ENCODE measurements at regions of chr13 and their contacts with region 1.

Region 1: GRCh38 chr13:29140277-29140676 is 320.1 kb downstream of the MTUS2 start:
- DNase-seq: no peak
- ATAC-seq: no peak
- H3K4me3 ChIP-seq: no peak overlapping the region
- H3K4me3 Mint-ChIP-seq: no peak overlapping the region
- H3K27ac ChIP-seq: no peak overlapping the region
- H3K27ac Mint-ChIP-seq: no peak overlapping the region
- H3K4me1 ChIP-seq: no peaks in the 10 kb centered on the region
- H3K4me1 Mint-ChIP-seq: no peaks in the 10 kb centered on the region
- H3K27me3 ChIP-seq: no peaks in the 10 kb centered on the region
- H3K27me3 Mint-ChIP-seq: peaks cover 0 to 6% (median 0%) of the 10 kb centered on the region in 5 donors

Region 2: DNA sequence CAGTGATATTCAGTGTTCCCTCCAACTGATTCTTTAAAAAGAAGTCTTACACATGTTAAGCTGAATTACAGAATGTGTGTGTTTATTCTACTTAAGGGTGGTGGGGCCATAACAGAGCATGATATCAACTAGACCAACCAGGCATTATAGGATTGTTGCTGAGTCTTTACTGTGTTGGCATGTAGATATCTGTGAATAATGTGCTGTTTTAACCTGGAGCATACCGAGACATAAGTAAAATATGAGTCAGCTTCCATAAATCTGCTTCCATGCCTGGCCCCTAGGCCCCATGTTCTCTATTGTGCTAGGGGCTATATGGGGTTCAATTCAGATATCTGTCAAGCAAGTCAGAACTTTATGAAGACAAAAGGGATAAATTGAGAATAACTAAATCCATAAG is 24.4 kb before region 1 on chr13:
- CTCF ChIA-PET with region 1: no interaction called
- POLR2A ChIA-PET with region 1: no interaction called
- intact Hi-C with region 1: loop called in 1 of 2 experiments (anchors 2 kb)
- DNase-seq: no peak
- ATAC-seq: no peak
- H3K4me3 ChIP-seq: no peak overlapping the region
- H3K4me3 Mint-ChIP-seq: no peak overlapping the region
- H3K27ac ChIP-seq: no peak overlapping the region
- H3K27ac Mint-ChIP-seq: no peak overlapping the region
- H3K4me1 ChIP-seq: no peaks in the 10 kb centered on the region
- H3K4me1 Mint-ChIP-seq: no peaks in the 10 kb centered on the region
- H3K27me3 ChIP-seq: no peaks in the 10 kb centered on the region
- H3K27me3 Mint-ChIP-seq: peaks cover 0 to 13% (median 0%) of the 10 kb centered on the region in 5 donors

Region 3: DNA sequence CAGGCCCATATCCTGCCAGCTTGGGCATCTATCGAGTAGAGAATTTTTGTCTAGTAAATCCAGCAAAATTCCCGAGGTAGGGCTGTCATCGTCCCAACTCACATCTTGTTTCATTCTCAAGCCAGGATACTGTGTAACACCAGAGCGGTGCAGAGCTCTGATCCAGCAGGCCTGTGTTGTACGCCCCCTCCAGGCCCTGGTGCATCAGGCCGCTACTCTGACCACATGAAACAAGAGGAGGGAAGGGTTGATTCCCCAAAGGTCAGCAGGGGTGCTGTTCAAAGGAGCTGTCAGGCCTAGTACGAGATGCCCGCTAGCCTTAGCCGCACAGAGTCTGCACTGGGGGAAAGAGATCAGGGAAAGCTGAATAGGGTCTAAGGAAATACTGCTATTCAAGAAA is 179.2 kb after region 1 on chr13:
- CTCF ChIA-PET with region 1: no interaction called
- POLR2A ChIA-PET with region 1: no interaction called
- intact Hi-C with region 1: no loop called
- DNase-seq: no peak
- ATAC-seq: no peak
- H3K4me3 ChIP-seq: no peak overlapping the region
- H3K4me3 Mint-ChIP-seq: no peak overlapping the region
- H3K27ac ChIP-seq: no peak overlapping the region
- H3K27ac Mint-ChIP-seq: no peak overlapping the region
- H3K4me1 ChIP-seq: no peaks in the 10 kb centered on the region
- H3K4me1 Mint-ChIP-seq: no peaks in the 10 kb centered on the region
- H3K27me3 ChIP-seq: no peaks in the 10 kb centered on the region
- H3K27me3 Mint-ChIP-seq: peaks cover 0 to 20% (median 11%) of the 10 kb centered on the region in 5 donors

Measured in naive thymus-derived CD4-positive, alpha-beta T cell (primary cell).